Panc1 (cell line): ENCODE measurements at regions of chr6 and their contacts with region 1.

Region 1: GRCh38 chr6:89599727-89600126 is 38.8 kb downstream of the LYRM2 start:
- DNase-seq: no peak
- ATAC-seq: no peak
- H3K4me3 ChIP-seq: no peak overlapping the region
- H3K27ac ChIP-seq: no peak overlapping the region
- H3K4me1 ChIP-seq: no peaks in the 10 kb centered on the region
- H3K27me3 ChIP-seq: no peaks in the 10 kb centered on the region
- CTCF ChIP-seq: no peak

Region 2: GRCh38 chr6:87832025-87832825 is 1767.5 kb before region 1 on chr6:
- CTCF ChIA-PET with region 1: no interaction called
- POLR2A ChIA-PET with region 1: no interaction called
- in situ Hi-C with region 1: no loop called
- intact Hi-C with region 1: no loop called
- DNase-seq: no peak
- ATAC-seq: peak; percentile 77; the same call in 1 of the 2 replicates
- H3K4me3 ChIP-seq: peak overlapping the region; percentile 15 to 43
- H3K27ac ChIP-seq: no peak overlapping the region
- H3K4me1 ChIP-seq: no peaks in the 10 kb centered on the region
- H3K27me3 ChIP-seq: no peaks in the 10 kb centered on the region
- CTCF ChIP-seq: peak; percentile 54; the same call in 1 of the 2 replicates

Region 3: DNA sequence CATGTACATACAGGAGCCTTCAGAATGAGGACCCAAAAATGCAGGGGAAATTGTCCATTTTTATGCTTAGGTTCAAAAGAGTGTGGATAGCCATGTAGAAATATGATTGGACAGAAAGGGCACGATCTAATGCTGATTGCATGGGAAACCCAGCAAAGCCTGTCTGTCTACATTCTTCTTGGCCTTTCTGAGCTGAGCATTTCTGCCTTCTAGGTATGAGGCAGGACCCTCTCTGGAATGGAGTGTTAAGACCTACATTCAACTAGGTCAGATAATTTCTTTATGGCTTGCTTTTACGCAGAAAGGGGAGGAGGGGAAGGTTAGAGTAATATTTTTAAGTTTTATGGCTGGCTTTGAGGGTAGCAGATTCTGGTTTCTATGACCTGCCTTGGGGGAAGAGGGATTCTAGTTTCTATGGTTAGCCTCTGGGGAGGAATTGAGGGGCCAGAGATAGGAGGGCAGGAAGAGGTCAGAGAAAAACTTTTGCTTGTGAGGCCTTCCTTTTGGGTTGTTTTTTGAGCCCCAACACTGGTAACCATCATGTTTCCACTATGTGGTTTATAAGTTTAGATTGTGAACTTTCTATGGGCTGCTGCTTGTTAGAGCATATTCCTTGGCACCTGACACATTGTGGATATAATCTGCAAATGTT is 24.7 kb before region 1 on chr6:
- CTCF ChIA-PET with region 1: no interaction called
- POLR2A ChIA-PET with region 1: no interaction called
- in situ Hi-C with region 1: no loop called
- intact Hi-C with region 1: no loop called
- DNase-seq: no peak
- ATAC-seq: no peak
- H3K4me3 ChIP-seq: no peak overlapping the region
- H3K27ac ChIP-seq: no peak overlapping the region
- H3K4me1 ChIP-seq: no peaks in the 10 kb centered on the region
- H3K27me3 ChIP-seq: no peaks in the 10 kb centered on the region
- CTCF ChIP-seq: no peak

Region 4: DNA sequence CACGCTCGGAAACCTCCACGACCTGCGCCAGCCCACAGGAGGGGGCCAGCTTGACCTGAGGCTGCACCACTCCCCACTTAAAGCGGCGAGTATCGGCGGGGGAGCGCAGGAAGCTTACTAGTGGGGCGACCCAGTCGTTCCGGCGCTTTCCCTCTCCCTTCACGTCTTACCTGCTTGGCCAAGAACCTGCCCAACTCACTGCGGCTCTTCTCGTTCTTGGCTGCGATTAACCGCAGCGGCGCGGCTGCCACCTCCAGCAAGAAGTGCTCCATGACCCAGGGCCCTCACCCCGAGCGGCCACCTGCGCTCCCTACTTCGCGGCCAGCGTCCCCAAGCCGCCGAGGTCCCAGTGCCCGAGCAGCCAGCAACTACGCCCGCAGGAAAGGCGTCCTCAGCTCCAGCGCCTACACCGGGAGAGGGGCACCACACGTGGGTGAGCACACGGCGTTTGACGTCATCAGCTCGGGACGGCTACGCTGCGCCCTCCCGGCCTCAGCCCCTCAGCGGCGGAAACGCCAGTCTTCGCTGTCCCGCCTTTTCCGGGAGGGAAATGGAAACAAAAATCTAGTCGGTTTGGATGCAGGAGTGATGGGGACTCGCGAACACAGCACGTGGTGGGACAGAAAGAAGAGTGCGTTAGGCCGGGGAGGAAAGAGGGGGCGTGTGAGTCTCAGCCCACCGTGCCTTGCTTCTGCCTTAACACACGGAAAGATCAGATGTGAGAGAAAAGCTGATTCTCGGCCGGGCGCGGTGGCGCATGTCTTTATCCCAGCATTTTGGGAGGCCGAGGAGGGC is 219.8 kb after region 1 on chr6 and contains the start of gene MDN1:
- CTCF ChIA-PET with region 1: no interaction called
- POLR2A ChIA-PET with region 1: interaction called, 10 read pairs
- in situ Hi-C with region 1: no loop called
- intact Hi-C with region 1: no loop called
- DNase-seq: peak; percentile 82
- ATAC-seq: peak; percentile 99
- H3K4me3 ChIP-seq: peak within 1 kb of the TSS; percentile 80 to 98
- H3K27ac ChIP-seq: peak within 1 kb of the TSS; percentile 82
- H3K4me1 ChIP-seq: peaks cover 19% of the 10 kb centered on the region
- H3K27me3 ChIP-seq: no peaks in the 10 kb centered on the region
- CTCF ChIP-seq: no peak
- total RNA-seq, gene MDN1: 47.8 TPM

Region 5: DNA sequence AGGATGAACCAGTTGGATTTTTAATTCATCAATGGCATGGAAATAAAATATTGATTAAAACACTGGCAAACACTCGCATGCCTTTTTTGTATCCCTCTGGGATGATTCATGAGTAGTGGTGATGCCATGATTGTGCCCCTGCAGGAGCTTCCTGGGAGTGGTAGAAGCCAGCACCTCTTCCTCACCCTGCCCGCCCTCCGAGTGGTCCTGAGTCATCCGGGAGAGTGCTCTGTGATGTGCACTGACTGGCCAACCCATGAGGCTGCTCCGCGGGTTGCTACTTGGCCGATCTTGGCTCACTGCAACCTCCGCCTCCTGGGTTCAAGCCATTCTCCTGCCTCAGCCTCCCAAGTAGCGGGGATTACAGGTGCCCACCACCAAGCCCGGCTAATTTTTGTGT is 322.0 kb after region 1 on chr6:
- CTCF ChIA-PET with region 1: no interaction called
- POLR2A ChIA-PET with region 1: no interaction called
- in situ Hi-C with region 1: no loop called
- intact Hi-C with region 1: no loop called
- DNase-seq: no peak
- ATAC-seq: no peak
- H3K4me3 ChIP-seq: no peak overlapping the region
- H3K27ac ChIP-seq: no peak overlapping the region
- H3K4me1 ChIP-seq: no peaks in the 10 kb centered on the region
- H3K27me3 ChIP-seq: no peaks in the 10 kb centered on the region
- CTCF ChIP-seq: no peak